ENCODE measurements at regions of chr18 and their contacts with region 1.

Region 1: GRCh38 chr18:51029694-51030536 is at the start of gene SMAD4:
- DNase-seq: peak; percentile 97 to 99 (median 98)
- H3K4me3 ChIP-seq: peak within 1 kb of the TSS; percentile 77
- H3K4me3 Mint-ChIP-seq: peak within 1 kb of the TSS; percentile 97 to 99 (median 98)
- H3K27ac ChIP-seq: peak within 1 kb of the TSS; percentile 75
- H3K27ac Mint-ChIP-seq: peak within 1 kb of the TSS; percentile 98 to 100 (median 99)
- H3K4me1 ChIP-seq: peaks cover 58% of the 10 kb centered on the region
- H3K4me1 Mint-ChIP-seq: peaks cover 39 to 69% (median 59%) of the 10 kb centered on the region in 3 donors
- H3K27me3 ChIP-seq: no peaks in the 10 kb centered on the region
- H3K27me3 Mint-ChIP-seq: peaks cover 0 to 4% of the 10 kb centered on the region in 2 donors
- total RNA-seq, gene SMAD4: 81.9 to 84.3 TPM

Region 2: DNA sequence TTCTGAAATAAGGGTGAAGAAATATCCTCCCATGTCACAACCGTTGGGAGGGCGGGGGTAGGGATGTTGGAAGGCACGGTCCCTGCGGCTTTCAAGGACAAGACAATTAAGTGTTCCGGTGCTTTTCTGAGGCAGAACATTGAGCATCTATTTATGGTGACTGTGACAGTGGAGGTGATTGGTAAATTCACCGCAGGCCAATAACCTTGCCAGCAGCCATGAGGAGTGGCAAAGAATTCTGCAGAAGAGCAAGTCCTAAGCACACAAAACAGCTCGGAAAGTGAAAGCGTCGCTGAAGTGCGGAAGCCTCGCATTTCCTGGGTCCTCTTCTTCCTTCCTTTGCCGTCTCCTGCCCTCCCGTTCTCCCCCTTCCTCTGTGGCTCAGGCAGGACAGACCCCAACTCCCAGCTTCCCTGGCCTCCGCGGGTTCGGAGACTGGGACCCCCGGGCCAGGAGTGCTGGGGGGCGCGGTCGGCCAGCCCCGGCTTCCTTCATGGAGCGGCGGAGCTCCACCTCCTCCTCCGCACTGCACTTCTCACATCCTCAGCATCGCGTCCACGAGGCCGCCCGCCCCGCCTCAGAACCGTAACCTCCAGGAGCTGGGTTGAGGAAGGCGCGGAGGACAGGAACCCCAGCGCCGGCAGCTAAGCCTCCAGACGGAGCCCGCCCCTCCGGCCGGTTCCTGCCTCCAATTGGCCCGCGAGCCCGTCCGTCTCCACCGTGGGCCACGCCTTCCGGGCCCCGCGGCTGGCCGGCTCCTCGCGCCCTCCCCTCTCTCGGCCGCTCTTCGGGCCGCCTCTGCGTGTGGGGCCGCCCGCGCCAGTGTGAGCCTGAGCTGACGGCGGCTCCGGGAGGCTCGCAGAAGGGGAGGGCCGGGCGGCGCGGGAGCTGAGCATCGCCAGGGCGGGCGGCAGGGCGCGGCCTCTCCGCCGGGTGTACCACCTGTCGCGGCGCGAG is 151.3 kb before region 1 on chr18 and contains the start of gene ME2:
- CTCF ChIA-PET with region 1: interaction called, 7 read pairs
- POLR2A ChIA-PET with region 1: interaction called, 42 read pairs
- DNase-seq: peak; percentile 82 to 91 (median 86)
- H3K4me3 ChIP-seq: peak within 1 kb of the TSS; percentile 83
- H3K4me3 Mint-ChIP-seq: peak within 1 kb of the TSS; percentile 94 to 99 (median 98)
- H3K27ac ChIP-seq: peak within 1 kb of the TSS; percentile 85
- H3K27ac Mint-ChIP-seq: peak within 1 kb of the TSS; percentile 94 to 100 (median 99)
- H3K4me1 ChIP-seq: peaks cover 33% of the 10 kb centered on the region
- H3K4me1 Mint-ChIP-seq: peaks cover 26 to 41% (median 34%) of the 10 kb centered on the region in 3 donors
- H3K27me3 ChIP-seq: no peaks in the 10 kb centered on the region
- H3K27me3 Mint-ChIP-seq: peaks cover 4 to 5% of the 10 kb centered on the region in 2 donors
- total RNA-seq, gene ME2: 114 to 120 TPM

Region 3: DNA sequence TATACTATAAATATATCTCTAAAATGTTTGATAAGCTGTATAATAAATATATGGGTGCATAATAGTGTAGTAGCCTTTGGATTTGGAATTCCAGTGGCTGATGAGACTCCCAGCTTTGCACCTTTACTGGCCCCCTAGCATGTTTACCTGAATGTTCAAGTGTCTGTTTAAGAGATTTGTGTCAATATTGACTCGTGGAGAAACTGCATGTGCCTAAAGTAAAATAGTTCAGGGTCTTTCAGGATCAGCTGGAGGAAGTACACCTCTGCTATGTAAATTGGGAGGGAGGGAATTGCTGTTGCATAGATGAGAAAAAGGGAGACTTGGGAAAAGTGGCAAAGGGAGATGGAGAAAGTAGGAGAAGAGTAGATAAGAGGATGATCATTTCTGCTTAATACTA is 127.1 kb before region 1 on chr18:
- CTCF ChIA-PET with region 1: no interaction called
- POLR2A ChIA-PET with region 1: no interaction called
- DNase-seq: no peak
- H3K4me3 ChIP-seq: no peak overlapping the region
- H3K4me3 Mint-ChIP-seq: no peak overlapping the region
- H3K27ac ChIP-seq: no peak overlapping the region
- H3K27ac Mint-ChIP-seq: peak overlapping the region in 4 of 8 donors; percentile 2 to 64 (median 34)
- H3K4me1 ChIP-seq: no peaks in the 10 kb centered on the region
- H3K4me1 Mint-ChIP-seq: peaks cover 19 to 46% (median 39%) of the 10 kb centered on the region in 3 donors
- H3K27me3 ChIP-seq: no peaks in the 10 kb centered on the region
- H3K27me3 Mint-ChIP-seq: no peaks in the 10 kb centered on the region

Region 4: DNA sequence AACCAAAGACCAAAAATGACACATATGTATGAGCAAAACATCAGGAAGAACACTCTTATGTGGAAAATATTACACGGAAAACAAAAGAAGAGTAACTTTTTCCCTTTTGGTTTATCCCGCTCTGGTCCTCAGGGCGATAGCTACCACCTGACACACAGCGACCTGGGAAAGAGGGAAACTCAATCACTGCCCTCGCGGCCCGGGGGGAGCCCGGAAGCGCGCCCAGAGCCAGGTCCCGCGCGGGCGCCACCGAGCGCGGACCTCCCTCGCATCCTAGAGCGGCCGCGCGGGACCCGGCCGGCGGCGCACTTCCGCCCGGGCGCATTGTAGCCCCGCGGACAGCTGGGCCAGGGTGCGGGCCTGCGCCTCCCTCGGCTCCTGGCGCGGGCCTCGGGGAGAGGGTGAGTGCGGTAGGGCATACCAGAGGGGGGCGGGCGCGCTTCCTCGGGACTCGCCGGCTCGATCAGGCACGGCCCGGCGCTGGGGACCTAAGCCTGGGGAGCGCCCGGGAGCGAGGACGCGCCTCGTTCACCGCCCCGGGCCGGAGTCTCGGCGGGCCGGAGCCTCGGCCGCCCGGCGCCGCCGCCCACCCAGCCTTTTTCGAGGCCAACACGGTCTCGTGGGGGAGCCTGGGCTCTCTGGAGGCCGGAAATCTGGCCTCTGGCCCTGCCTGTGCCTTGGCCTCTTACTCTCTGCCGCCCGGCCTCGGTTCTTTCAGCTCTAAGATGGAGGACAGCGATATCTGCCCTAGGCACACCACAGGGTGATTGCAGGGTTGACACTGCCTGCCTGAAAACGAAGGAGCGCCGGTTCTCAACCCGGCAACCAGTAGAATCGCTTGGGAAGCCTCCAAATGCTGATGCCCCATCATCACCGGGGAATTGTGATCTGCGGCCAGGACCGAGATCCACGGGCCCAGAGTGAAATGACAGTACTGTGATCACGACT is 61.9 kb before region 1 on chr18 and contains the start of gene ELAC1:
- CTCF ChIA-PET with region 1: interaction called, 10 read pairs
- POLR2A ChIA-PET with region 1: interaction called, 44 read pairs
- DNase-seq: peak; percentile 39 to 74 (median 67)
- H3K4me3 ChIP-seq: peak within 1 kb of the TSS; percentile 87
- H3K4me3 Mint-ChIP-seq: peak within 1 kb of the TSS; percentile 92 to 97 (median 95)
- H3K27ac ChIP-seq: peak within 1 kb of the TSS; percentile 93
- H3K27ac Mint-ChIP-seq: peak within 1 kb of the TSS; percentile 77 to 97 (median 94)
- H3K4me1 ChIP-seq: peaks cover 9% of the 10 kb centered on the region
- H3K4me1 Mint-ChIP-seq: peaks cover 22 to 37% (median 34%) of the 10 kb centered on the region in 3 donors
- H3K27me3 ChIP-seq: no peaks in the 10 kb centered on the region
- H3K27me3 Mint-ChIP-seq: peaks cover 0 to 6% of the 10 kb centered on the region in 2 donors
- total RNA-seq, gene ELAC1: 10.3 to 10.5 TPM

Region 5: DNA sequence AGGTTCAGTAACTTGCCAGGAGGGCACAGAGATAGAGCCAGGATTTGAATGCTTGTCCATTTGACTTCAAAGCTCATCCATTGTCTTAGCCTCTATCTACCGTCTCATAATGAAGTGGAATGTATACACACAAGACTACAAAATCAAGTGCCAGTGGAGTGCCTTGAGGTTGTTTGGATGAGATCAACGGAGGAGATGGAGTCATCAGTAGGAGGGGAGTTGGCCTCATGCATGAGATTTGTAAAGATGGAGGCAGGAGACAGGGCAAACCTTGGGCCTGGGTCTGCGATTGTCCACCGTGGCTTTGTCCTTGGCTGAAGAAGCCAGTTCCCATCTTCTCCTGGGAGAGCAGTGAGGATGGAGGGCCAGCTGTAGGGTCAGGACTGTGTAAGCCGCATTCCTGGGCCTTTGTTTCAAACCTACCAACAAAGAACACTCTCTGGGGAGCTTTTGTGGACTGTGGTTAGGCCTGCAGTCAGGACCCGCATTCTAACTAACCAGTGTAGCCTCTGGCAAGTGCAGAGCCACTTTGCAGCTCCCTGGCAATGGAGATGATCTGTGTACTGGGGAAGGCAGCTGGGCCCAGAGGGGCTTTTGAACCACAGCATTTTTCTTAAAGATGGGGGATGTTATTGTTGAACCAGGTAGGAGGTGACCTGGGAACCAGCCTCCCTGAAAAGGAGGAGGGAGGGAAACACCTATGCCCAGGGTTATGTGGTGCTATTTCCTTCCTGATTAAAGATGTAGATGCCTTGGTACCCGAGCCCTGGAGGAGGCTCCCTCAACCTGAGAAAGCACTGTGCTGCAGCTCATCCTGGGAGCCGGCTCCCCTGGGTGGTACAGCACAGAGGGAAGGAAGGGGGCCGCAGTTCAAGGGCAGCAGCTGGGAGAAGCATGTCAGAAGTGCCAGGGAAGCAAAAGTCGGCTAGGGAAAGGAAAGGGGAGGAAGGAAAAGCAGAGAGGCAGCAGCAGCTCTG is 12.7 kb before region 1 on chr18:
- CTCF ChIA-PET with region 1: no interaction called
- POLR2A ChIA-PET with region 1: no interaction called
- DNase-seq: no peak
- H3K4me3 ChIP-seq: no peak overlapping the region
- H3K4me3 Mint-ChIP-seq: no peak overlapping the region
- H3K27ac ChIP-seq: no peak overlapping the region
- H3K27ac Mint-ChIP-seq: peak overlapping the region in 5 of 8 donors; percentile 5 to 92 (median 42)
- H3K4me1 ChIP-seq: no peaks in the 10 kb centered on the region
- H3K4me1 Mint-ChIP-seq: no peaks in the 10 kb centered on the region
- H3K27me3 ChIP-seq: no peaks in the 10 kb centered on the region
- H3K27me3 Mint-ChIP-seq: no peaks in the 10 kb centered on the region

Region 6: DNA sequence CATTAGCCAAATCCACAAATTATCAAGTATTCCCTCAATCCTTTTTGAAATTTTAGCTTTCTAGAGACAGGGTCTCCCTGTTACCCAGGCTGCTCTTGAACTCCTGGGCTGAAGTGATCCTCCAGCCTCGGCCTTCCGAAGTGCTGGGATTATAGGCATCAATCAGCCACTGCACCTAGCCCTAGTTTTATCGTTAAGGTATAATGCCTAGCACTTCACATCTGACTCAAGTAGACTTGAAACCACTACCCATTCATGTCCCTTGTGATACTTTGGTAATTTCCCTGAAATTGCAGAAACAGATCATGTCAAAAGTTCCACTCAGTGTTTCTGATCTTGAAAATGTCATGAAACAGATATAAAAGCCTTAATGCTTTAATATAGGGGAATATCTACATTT is 141.3 kb after region 1 on chr18:
- CTCF ChIA-PET with region 1: no interaction called
- POLR2A ChIA-PET with region 1: no interaction called
- DNase-seq: no peak
- H3K4me3 ChIP-seq: no peak overlapping the region
- H3K4me3 Mint-ChIP-seq: no peak overlapping the region
- H3K27ac ChIP-seq: no peak overlapping the region
- H3K27ac Mint-ChIP-seq: no peak overlapping the region
- H3K4me1 ChIP-seq: no peaks in the 10 kb centered on the region
- H3K4me1 Mint-ChIP-seq: peaks cover 36 to 75% (median 64%) of the 10 kb centered on the region in 3 donors
- H3K27me3 ChIP-seq: no peaks in the 10 kb centered on the region
- H3K27me3 Mint-ChIP-seq: no peaks in the 10 kb centered on the region

Region 7: DNA sequence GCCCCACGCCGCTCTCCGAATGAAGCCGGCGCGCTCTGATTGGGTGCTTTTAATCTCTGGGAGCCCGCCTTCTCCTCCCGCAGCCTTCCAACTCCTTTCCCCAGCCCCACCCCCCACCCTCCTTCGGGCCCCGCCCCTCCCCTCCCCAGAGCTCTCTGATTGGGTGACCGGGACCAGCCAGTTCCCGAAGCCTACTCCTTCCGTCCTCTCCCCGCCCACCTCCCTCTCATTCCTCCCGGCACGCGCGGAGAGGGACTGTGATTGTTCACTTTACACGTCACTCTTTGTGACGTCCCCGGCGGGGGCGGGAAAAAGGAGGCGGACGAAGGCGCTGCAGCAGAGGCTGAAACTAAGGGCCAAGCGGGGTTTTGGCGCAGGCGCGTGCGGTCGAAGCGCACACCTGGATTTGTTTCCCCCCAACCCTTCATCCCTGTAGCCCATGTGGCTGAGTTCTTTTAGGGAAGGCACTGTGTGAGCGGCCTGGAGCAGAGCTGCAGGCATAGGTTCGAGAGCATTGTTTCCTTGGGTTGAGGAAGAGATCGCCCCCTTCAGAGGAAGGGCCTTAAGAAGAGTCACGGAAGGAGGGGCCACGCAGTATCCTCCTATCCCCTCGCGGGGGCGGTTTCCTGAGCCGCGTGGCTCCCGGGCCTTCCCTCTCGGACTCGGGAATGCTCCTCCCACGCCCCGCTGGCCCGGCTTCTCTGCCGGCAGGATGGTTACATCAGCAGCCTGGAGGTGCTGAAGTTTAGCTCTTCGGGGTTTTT is 167.9 kb after region 1 on chr18 and contains the start of gene MEX3C:
- CTCF ChIA-PET with region 1: interaction called, 8 read pairs
- POLR2A ChIA-PET with region 1: interaction called, 22 read pairs
- DNase-seq: peak; percentile 98 to 99 (median 99)
- H3K4me3 ChIP-seq: peak within 1 kb of the TSS; percentile 96
- H3K4me3 Mint-ChIP-seq: peak within 1 kb of the TSS; percentile 94 to 100 (median 99)
- H3K27ac ChIP-seq: peak within 1 kb of the TSS; percentile 85
- H3K27ac Mint-ChIP-seq: peak within 1 kb of the TSS; percentile 88 to 99 (median 98)
- H3K4me1 ChIP-seq: peaks cover 24% of the 10 kb centered on the region
- H3K4me1 Mint-ChIP-seq: peaks cover 28 to 33% (median 29%) of the 10 kb centered on the region in 3 donors
- H3K27me3 ChIP-seq: no peaks in the 10 kb centered on the region
- H3K27me3 Mint-ChIP-seq: peaks cover 0 to 3% of the 10 kb centered on the region in 2 donors
- total RNA-seq, gene MEX3C: 68.6 to 69.8 TPM